ENCODE measurements at regions of chr1 and their contacts with region 1.

Region 1: DNA sequence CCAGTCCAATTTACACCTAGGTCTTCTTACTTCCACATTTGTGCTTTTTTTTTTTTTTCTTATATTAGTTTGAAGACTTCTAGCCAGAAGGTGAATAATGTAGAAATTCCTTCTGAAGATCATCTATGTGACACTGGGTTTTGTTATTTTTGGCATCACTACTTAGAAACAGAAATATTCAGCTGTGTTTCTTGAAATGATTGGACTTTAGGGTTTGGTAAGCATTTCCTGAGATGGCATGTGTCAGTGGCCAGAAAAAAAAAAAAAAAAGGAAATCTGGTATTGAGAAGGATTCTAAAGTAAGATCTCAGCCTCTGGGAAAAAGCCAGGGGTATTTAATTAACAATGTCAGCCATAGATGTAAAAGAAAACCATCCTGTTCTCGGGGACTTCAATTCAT is 43.4 kb upstream of the LRRC8C start:
- DNase-seq: no peak
- ATAC-seq: no peak
- H3K4me3 ChIP-seq: no peak overlapping the region
- H3K27ac ChIP-seq: no peak overlapping the region
- H3K4me1 ChIP-seq: no peaks in the 10 kb centered on the region
- H3K27me3 ChIP-seq: no peaks in the 10 kb centered on the region

Region 2: GRCh38 chr1:89489047-89489729 is 100.3 kb before region 1 on chr1:
- intact Hi-C with region 1: loop called in 1 of 2 experiments (anchors 5 kb)
- DNase-seq: no peak
- ATAC-seq: peak; percentile 33
- H3K4me3 ChIP-seq: no peak overlapping the region
- H3K27ac ChIP-seq: no peak overlapping the region
- H3K4me1 ChIP-seq: no peaks in the 10 kb centered on the region
- H3K27me3 ChIP-seq: no peaks in the 10 kb centered on the region

Measured in aorta (tissue), 5 donors.